Activated B cell treated with CpG ODN at 0.5 μM for 24 hours (primary cell): ENCODE measurements at regions of chr15 and their contacts with region 1.

Region 1: GRCh38 chr15:81265944-81266775 is 57.8 kb downstream of the STARD5 start:
- DNase-seq: peak; percentile 64
- ATAC-seq: peak; percentile 92
- H3K4me3 Mint-ChIP-seq: peak overlapping the region; percentile 69
- H3K27ac Mint-ChIP-seq: no peak overlapping the region
- H3K4me1 Mint-ChIP-seq: peaks cover 19% of the 10 kb centered on the region
- H3K27me3 Mint-ChIP-seq: no peaks in the 10 kb centered on the region
- CTCF ChIP-seq: no peak

Region 2: GRCh38 chr15:80455668-80456442 is 810.3 kb before region 1 on chr15:
- CTCF ChIA-PET with region 1: interaction called, 29 read pairs
- POLR2A ChIA-PET with region 1: no interaction called
- intact Hi-C with region 1: loop called (anchors 1 kb)
- DNase-seq: peak; percentile 23
- ATAC-seq: peak; percentile 73
- H3K4me3 Mint-ChIP-seq: no peak overlapping the region
- H3K27ac Mint-ChIP-seq: no peak overlapping the region
- H3K4me1 Mint-ChIP-seq: no peaks in the 10 kb centered on the region
- H3K27me3 Mint-ChIP-seq: peaks cover 7% of the 10 kb centered on the region
- CTCF ChIP-seq: peak; percentile 70

Region 3: DNA sequence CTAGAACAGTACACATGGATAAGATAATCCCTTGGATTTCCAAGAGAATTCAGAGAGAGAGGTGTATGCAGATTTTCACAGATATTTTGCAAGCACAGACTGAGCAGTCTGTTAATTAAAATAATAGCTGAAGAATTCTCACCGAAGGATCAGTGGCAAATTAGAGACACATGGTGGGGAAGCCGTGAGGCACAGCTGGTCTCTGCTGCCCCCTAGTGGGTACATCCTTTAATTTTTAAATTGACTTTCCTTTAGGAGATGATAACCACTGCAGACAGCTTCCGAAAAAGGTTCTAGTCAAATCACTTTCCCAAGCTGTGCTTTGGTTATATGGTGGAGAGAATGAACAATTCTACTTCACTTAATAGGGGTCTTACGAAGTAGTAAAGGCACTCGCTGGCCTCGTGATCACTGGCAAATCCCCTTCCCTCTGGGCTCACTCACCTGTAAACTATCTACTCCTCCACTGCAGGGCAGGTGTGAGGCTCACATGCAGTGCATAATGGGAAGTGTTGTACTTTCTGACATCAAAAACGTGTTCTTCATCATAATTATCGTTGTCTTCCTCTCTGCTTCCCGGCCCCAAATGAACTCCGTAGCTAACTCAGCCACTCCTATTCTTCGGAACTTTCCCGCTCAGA is 296.0 kb before region 1 on chr15:
- CTCF ChIA-PET with region 1: interaction called, 20 read pairs
- POLR2A ChIA-PET with region 1: no interaction called
- intact Hi-C with region 1: no loop called
- DNase-seq: no peak
- ATAC-seq: peak; percentile 56
- H3K4me3 Mint-ChIP-seq: no peak overlapping the region
- H3K27ac Mint-ChIP-seq: no peak overlapping the region
- H3K4me1 Mint-ChIP-seq: peaks cover 9% of the 10 kb centered on the region
- H3K27me3 Mint-ChIP-seq: no peaks in the 10 kb centered on the region
- CTCF ChIP-seq: peak; percentile 91

Region 4: DNA sequence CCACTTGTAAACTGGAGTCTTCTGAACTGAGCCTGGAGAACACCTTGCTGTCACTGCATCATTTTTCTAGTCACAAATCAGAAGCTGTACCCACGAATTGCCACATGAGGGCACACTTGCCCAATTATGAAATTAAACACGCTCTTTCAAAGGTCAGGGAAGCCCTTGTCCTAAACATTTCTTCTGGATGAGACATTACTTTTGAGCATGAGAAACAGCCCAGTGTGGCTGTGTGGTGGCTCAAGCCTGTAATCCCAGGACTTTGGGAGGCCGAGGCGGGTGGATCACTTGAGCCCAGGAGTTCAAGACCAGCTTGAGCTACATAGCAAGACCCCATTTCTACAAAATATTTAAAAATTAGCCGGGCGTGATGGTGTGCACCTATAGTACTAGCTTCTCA is 159.6 kb before region 1 on chr15:
- CTCF ChIA-PET with region 1: interaction called, 319 read pairs
- POLR2A ChIA-PET with region 1: interaction called, 12 read pairs
- intact Hi-C with region 1: loop called (anchors 1 kb)
- DNase-seq: peak; percentile 19
- ATAC-seq: no peak
- H3K4me3 Mint-ChIP-seq: no peak overlapping the region
- H3K27ac Mint-ChIP-seq: no peak overlapping the region
- H3K4me1 Mint-ChIP-seq: peaks cover 7% of the 10 kb centered on the region
- H3K27me3 Mint-ChIP-seq: peaks cover 21% of the 10 kb centered on the region
- CTCF ChIP-seq: no peak

Region 5: DNA sequence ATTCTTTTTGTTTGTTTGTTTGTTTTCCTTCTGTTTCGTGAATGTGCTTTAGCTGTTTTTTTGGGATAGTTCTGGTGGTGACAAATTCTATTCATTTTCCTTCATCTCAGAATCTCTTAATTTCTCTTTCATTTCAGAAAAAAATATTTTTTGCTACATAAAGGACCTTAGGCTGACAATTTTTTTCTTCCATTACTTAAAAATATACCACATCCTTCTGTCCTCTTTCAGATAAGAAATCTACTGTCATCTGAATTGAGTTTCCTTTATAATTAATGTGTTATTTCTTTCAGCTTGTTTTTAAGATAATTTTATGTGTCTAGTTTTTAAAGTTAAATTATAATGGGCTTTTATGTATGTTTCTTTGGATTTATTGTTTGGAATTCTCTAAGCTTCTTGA is 21.9 kb before region 1 on chr15:
- CTCF ChIA-PET with region 1: interaction called, 13 read pairs
- POLR2A ChIA-PET with region 1: no interaction called
- intact Hi-C with region 1: no loop called
- DNase-seq: no peak
- ATAC-seq: no peak
- H3K4me3 Mint-ChIP-seq: no peak overlapping the region
- H3K27ac Mint-ChIP-seq: no peak overlapping the region
- H3K4me1 Mint-ChIP-seq: no peaks in the 10 kb centered on the region
- H3K27me3 Mint-ChIP-seq: no peaks in the 10 kb centered on the region
- CTCF ChIP-seq: no peak

Region 6: GRCh38 chr15:81336568-81336967 is 70.4 kb after region 1 on chr15:
- CTCF ChIA-PET with region 1: interaction called, 158 read pairs
- POLR2A ChIA-PET with region 1: no interaction called
- intact Hi-C with region 1: no loop called
- DNase-seq: no peak
- ATAC-seq: peak; percentile 61
- H3K4me3 Mint-ChIP-seq: no peak overlapping the region
- H3K27ac Mint-ChIP-seq: no peak overlapping the region
- H3K4me1 Mint-ChIP-seq: peaks cover 12% of the 10 kb centered on the region
- H3K27me3 Mint-ChIP-seq: no peaks in the 10 kb centered on the region
- CTCF ChIP-seq: no peak

Region 7: GRCh38 chr15:81680829-81681228 is 414.7 kb after region 1 on chr15:
- CTCF ChIA-PET with region 1: no interaction called
- POLR2A ChIA-PET with region 1: no interaction called
- intact Hi-C with region 1: no loop called
- DNase-seq: no peak
- ATAC-seq: no peak
- H3K4me3 Mint-ChIP-seq: no peak overlapping the region
- H3K27ac Mint-ChIP-seq: no peak overlapping the region
- H3K4me1 Mint-ChIP-seq: no peaks in the 10 kb centered on the region
- H3K27me3 Mint-ChIP-seq: no peaks in the 10 kb centered on the region
- CTCF ChIP-seq: no peak